Psoas muscle (tissue), 8 donors: ENCODE measurements at regions of chr7 and their contacts with region 1.

Region 1: DNA sequence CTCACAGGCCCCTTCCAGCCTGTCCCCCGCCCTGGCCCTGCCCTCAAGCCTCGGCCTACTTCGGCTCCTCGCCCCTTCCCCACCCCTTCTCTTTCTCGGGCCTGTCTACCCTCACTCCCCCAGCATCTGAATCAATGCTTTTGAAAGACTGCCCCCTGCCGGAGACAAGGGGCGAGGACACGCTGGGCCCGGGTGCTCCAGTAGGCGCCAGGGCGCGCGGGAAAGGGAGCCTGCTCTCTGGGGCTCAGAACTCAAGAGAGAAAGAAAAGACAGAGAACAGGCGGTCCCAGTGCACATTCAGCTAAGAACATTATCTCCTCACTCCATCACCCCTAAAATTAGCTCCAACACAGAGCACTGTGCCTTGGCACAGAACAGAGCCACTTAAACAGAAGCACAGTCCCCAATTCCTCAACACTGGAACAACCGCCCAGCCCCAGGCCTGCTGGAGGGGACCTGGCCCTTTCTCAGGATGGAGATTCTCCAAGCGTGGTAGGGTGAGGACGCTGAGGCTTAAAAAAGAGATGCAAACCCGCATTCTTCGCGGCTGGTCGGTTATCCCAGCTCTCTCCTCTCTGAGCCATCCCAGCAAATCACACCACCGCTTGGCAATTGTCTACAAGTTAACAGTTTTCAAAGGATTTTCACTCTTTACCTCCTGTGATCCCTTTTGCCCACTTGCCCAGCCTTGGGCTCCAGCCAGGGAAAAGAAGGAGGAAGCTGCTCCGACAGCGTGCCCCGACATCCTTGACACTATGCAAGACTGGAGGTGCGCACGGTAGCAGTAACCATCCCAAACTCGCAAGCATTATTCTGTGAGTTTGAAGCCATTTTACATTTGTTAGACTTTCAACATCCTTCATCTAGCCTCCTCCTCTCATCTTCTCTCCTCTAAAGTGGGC is 2.1 kb downstream of the GIGYF1 start:
- DNase-seq: peak; percentile 79 to 89
- ATAC-seq: peak; percentile 74 to 91 (median 84)
- H3K4me3 ChIP-seq: peak overlapping the region; percentile 93
- H3K27ac ChIP-seq: no peak overlapping the region
- H3K4me1 ChIP-seq: peaks cover 44% of the 10 kb centered on the region
- H3K27me3 ChIP-seq: no peaks in the 10 kb centered on the region
- CTCF ChIP-seq: peak; percentile 85

Region 2: DNA sequence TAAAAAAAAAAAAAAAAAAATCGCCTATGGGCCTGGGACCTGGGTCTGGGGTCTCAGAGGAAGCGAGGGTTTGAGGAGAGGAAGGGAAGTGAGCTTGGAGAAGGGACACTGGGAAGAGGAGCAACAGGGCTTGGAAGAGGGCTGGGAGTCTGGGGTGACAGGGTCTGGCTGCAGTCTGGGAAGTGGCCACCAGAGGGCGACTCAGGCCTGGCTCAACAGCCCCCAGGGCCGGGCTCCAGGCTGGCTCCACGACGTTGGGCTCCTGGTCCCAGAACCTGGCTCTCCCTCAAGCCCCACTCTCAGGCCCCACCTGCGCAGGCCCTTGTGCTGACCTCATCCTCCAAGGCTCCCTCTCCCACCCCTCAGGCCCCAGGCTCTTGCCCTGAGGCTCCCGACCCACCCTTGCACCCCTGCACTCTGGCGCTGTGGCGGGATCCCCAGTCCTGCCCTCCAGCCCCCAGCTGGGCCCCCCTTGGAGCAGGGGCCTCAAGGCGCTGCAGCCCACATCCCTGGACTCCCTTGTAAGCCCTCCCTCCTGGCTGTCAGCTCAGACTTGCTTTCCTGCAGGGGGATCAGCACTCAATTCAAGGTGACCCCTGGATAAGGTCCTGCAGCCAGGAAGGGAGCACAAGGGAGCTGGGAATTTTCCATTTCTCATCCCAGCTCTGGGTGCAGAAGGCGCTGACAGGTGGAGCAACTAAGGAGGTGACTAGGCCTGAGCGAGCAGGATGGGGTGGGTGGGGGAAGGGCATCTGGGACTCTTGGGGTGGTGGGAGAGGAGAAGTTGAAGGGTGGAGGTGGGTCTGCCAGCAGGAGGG is 222.5 kb before region 1 on chr7:
- intact Hi-C with region 1: loop called in 1 of 2 experiments (anchors 5 kb)
- DNase-seq: peak; percentile 88 to 94
- ATAC-seq: peak; percentile 84 to 87 (median 86)
- H3K4me3 ChIP-seq: no peak overlapping the region
- H3K27ac ChIP-seq: no peak overlapping the region
- H3K4me1 ChIP-seq: peaks cover 11% of the 10 kb centered on the region
- H3K27me3 ChIP-seq: no peaks in the 10 kb centered on the region
- CTCF ChIP-seq: peak; percentile 92

Region 3: DNA sequence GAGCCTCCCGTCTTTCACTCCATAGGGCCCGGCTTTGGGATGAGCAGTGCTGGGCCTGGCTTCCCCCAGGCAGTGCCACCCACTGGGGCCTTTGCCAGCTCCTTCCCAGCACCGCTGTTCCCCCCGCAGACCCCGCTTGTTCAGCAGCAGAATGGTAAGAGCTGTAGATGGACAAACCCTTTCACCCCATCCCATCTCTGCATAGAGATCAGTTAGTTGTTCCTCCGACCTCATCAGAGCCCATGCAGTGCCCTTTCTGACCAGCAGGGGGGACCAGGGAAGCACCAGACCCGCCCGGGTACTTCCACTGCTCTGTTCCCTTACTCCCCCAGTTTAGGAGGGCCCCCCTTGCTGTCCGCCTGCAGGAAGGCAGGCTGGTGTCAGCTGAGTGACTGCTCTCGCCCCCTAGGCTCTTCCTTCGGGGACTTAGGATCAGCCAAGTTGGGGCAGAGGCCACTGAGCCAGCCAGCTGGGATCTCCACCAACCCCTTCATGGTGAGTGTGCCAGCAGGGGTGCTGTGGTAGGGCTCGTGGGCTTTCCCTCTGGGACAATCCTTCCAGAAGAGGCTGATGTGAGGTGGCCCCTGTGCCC is 128.0 kb before region 1 on chr7:
- intact Hi-C with region 1: loop called in 1 of 2 experiments (anchors 2 kb)
- DNase-seq: peak; percentile 83 to 89
- ATAC-seq: peak; percentile 62 to 82 (median 70)
- H3K4me3 ChIP-seq: no peak overlapping the region
- H3K27ac ChIP-seq: no peak overlapping the region
- H3K4me1 ChIP-seq: no peaks in the 10 kb centered on the region
- H3K27me3 ChIP-seq: no peaks in the 10 kb centered on the region
- CTCF ChIP-seq: peak; percentile 90

Region 4: DNA sequence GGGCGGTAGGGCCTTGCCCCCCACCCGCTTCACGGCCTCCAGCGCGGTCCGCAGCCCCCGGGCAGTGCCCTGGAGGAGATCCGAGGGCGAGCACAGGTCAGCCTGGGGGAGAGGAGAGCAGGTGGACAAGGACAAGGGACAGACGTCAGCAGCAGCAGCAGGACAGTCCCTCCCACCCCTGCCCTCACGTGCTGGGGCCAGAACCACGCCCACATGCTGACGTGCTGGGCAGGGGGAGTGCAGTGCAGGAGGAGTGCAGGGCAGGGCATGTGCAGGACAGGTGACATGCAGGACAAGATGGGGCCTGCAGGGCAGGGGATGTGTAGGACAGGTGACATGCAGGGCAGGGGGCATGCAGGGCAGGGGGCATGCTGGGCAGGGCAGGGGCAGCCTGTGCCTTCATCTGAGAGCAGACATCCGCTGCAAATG is 116.7 kb before region 1 on chr7:
- intact Hi-C with region 1: loop called in 1 of 2 experiments (anchors 5 kb)
- DNase-seq: no peak
- ATAC-seq: no peak
- H3K4me3 ChIP-seq: no peak overlapping the region
- H3K27ac ChIP-seq: no peak overlapping the region
- H3K4me1 ChIP-seq: no peaks in the 10 kb centered on the region
- H3K27me3 ChIP-seq: peaks cover 0 to 57% (median 10%) of the 10 kb centered on the region in 3 donors
- CTCF ChIP-seq: no peak

Region 5: GRCh38 chr7:100604028-100604975 is 87.6 kb before region 1 on chr7:
- intact Hi-C with region 1: loop called in 1 of 2 experiments (anchors 5 kb)
- DNase-seq: peak; percentile 77 to 86
- ATAC-seq: peak; percentile 70 to 90 (median 78)
- H3K4me3 ChIP-seq: peak overlapping the region; percentile 80
- H3K27ac ChIP-seq: no peak overlapping the region
- H3K4me1 ChIP-seq: peaks cover 5% of the 10 kb centered on the region
- H3K27me3 ChIP-seq: peaks cover 0 to 8% (median 3%) of the 10 kb centered on the region in 3 donors
- CTCF ChIP-seq: peak; percentile 18

Region 6: GRCh38 chr7:100632951-100633717 is 58.8 kb before region 1 on chr7:
- intact Hi-C with region 1: loop called in 1 of 2 experiments (anchors 5 kb)
- DNase-seq: peak; percentile 43 to 60
- ATAC-seq: peak; percentile 28 to 69 (median 58)
- H3K4me3 ChIP-seq: peak overlapping the region; percentile 65
- H3K27ac ChIP-seq: no peak overlapping the region
- H3K4me1 ChIP-seq: peaks cover 7% of the 10 kb centered on the region
- H3K27me3 ChIP-seq: peaks cover 0 to 22% (median 17%) of the 10 kb centered on the region in 3 donors
- CTCF ChIP-seq: no peak

Region 7: DNA sequence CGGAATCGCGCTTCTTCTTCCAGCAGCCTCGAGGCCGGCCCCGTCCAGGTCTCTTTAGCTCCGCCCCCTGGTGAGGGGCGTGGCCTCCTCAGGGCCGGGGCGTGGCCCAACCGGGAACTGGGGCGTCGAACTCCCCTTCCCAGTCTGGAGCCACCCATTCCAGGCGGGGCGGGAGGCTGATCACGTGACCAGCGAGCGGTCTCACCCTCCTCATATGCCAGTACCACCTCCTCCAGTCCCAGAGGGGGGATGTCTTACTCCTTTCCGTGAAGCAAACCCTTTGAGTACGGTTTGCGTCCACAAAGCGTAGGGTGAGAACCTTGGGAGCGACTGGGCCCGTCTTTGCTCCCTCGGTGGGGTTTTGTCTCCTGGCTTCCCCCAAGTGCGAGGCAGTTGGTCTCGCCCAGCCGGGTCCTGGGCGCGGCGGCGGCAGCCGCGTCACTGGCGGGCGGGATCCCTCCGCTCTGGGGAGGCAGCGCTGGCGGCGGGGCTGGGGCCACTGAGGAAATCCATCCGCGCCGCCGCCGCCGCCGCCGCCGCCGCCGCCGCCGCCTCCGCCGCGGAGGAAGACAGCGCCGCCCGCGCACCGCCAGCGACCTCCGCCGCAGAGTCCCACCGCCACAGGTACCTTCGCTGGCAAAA is 18.5 kb before region 1 on chr7 and contains the start of gene GNB2:
- intact Hi-C with region 1: loop called (anchors 2 kb)
- DNase-seq: peak; percentile 99 to 100
- ATAC-seq: peak; percentile 89 to 94 (median 92)
- H3K4me3 ChIP-seq: peak within 1 kb of the TSS; percentile 92
- H3K27ac ChIP-seq: peak within 1 kb of the TSS; percentile 97
- H3K4me1 ChIP-seq: no peaks in the 10 kb centered on the region
- H3K27me3 ChIP-seq: no peaks in the 10 kb centered on the region
- CTCF ChIP-seq: no peak
- total RNA-seq, gene GNB2: 87.1 to 130 (median 121) TPM